Gastrocnemius medialis (tissue), 4 donors: ENCODE measurements at regions of chr19 and their contacts with region 1.

Region 1: DNA sequence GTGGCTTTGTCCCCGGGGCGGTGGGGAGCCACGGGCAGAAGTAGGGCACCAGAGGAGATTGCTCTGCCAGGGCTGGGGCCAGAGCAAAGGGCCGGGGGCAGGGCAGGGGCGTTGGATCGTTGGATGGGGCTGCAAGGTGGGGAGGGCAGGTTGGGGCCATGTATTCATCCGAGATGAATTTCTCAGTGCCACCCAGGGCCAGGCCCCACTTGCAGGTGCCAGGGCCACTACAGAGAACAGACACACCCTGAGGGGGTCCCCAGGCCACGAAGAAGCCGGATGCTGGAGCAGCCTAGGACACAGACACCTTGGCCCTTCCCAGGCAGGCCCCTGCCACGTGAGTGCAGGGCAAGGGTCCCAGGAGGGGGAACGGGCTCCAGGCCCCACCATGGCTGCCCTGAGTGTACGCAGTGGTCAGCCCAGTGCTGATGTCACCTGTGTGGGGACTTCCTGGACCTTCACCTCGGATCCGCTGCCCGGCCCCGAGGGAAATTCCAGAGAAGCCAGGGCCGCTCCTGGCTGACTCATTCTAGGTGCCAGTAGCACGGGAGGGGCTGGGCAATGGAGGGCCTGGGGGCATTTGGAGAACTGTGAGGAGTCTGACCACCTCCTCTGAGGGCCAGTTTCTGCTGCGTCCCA is 9.6 kb upstream of the SBNO2 start:
- DNase-seq: no peak
- ATAC-seq: no peak
- H3K4me3 ChIP-seq: no peak overlapping the region
- H3K27ac ChIP-seq: no peak overlapping the region
- H3K4me1 ChIP-seq: no peaks in the 10 kb centered on the region
- H3K27me3 ChIP-seq: peaks cover 0 to 2% (median 0%) of the 10 kb centered on the region in 3 donors
- CTCF ChIP-seq: no peak
- POLR2A ChIP-seq: no peak

Region 2: GRCh38 chr19:1122972-1123363 is 60.7 kb before region 1 on chr19:
- in situ Hi-C with region 1: loop called in 1 of 4 experiments (anchors 10 kb)
- intact Hi-C with region 1: no loop called
- DNase-seq: no peak
- ATAC-seq: peak in 1 of 2 donors; percentile 42
- H3K4me3 ChIP-seq: no peak overlapping the region
- H3K27ac ChIP-seq: no peak overlapping the region
- H3K4me1 ChIP-seq: peaks cover 0 to 7% of the 10 kb centered on the region in 2 donors
- H3K27me3 ChIP-seq: no peaks in the 10 kb centered on the region
- CTCF ChIP-seq: no peak
- POLR2A ChIP-seq: no peak